WTC11 (cell line): ENCODE measurements at regions of chr1 and their contacts with region 1.

Region 1: GRCh38 chr1:165597883-165598675 is 33.0 kb upstream of the MGST3 start:
- DNase-seq: peak; percentile 93
- ATAC-seq: peak; percentile 97
- H3K4me3 Mint-ChIP-seq: peak overlapping the region; percentile 95
- H3K27ac Mint-ChIP-seq: peak overlapping the region; percentile 85
- H3K4me1 Mint-ChIP-seq: peaks cover 30% of the 10 kb centered on the region
- H3K27me3 Mint-ChIP-seq: peaks cover 15% of the 10 kb centered on the region
- CTCF ChIP-seq: no peak

Region 2: GRCh38 chr1:165392634-165393571 is 205.2 kb before region 1 on chr1:
- CTCF ChIA-PET with region 1: interaction called, 38 read pairs
- POLR2A ChIA-PET with region 1: no interaction called
- DNase-seq: peak; percentile 84
- ATAC-seq: peak; percentile 99
- H3K4me3 Mint-ChIP-seq: peak overlapping the region; percentile 64
- H3K27ac Mint-ChIP-seq: no peak overlapping the region
- H3K4me1 Mint-ChIP-seq: peaks cover 7% of the 10 kb centered on the region
- H3K27me3 Mint-ChIP-seq: peaks cover 24% of the 10 kb centered on the region
- CTCF ChIP-seq: peak; percentile 87

Region 3: DNA sequence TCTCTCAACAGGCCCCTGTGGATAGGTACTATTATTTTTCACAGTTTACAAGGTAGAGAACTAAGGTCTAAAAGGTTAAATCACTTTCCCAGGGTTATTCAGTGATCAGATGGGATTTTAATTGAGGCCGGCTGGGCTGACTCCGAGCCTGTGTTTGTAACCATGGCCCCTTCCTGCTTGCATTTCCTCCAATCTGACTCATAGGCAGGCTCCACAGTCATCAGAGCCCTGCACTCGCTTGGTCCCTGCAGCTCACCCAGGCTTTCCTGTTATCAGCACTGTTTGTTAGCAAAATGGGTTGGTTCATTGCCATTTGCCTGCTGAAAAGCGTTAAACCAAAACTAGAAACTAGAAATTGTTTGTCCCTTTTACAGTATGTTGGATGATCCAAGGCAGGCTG is 200.1 kb before region 1 on chr1:
- CTCF ChIA-PET with region 1: interaction called, 38 read pairs
- POLR2A ChIA-PET with region 1: no interaction called
- DNase-seq: no peak
- ATAC-seq: peak; percentile 46
- H3K4me3 Mint-ChIP-seq: no peak overlapping the region
- H3K27ac Mint-ChIP-seq: no peak overlapping the region
- H3K4me1 Mint-ChIP-seq: peaks cover 12% of the 10 kb centered on the region
- H3K27me3 Mint-ChIP-seq: peaks cover 9% of the 10 kb centered on the region
- CTCF ChIP-seq: no peak

Region 4: GRCh38 chr1:165403835-165404482 is 194.1 kb before region 1 on chr1:
- CTCF ChIA-PET with region 1: interaction called, 17 read pairs
- POLR2A ChIA-PET with region 1: no interaction called
- DNase-seq: peak; percentile 66
- ATAC-seq: peak; percentile 92
- H3K4me3 Mint-ChIP-seq: no peak overlapping the region
- H3K27ac Mint-ChIP-seq: no peak overlapping the region
- H3K4me1 Mint-ChIP-seq: no peaks in the 10 kb centered on the region
- H3K27me3 Mint-ChIP-seq: no peaks in the 10 kb centered on the region; the same call in 1 of the 2 replicates
- CTCF ChIP-seq: peak; percentile 64

Region 5: GRCh38 chr1:165409657-165410358 is 188.3 kb before region 1 on chr1:
- CTCF ChIA-PET with region 1: interaction called, 17 read pairs
- POLR2A ChIA-PET with region 1: no interaction called
- DNase-seq: no peak
- ATAC-seq: no peak
- H3K4me3 Mint-ChIP-seq: no peak overlapping the region
- H3K27ac Mint-ChIP-seq: no peak overlapping the region
- H3K4me1 Mint-ChIP-seq: no peaks in the 10 kb centered on the region
- H3K27me3 Mint-ChIP-seq: peaks cover 3% of the 10 kb centered on the region; the same call in 1 of the 2 replicates
- CTCF ChIP-seq: no peak

Region 6: GRCh38 chr1:165659581-165659895 is 61.5 kb after region 1 on chr1:
- CTCF ChIA-PET with region 1: interaction called, 10 read pairs
- POLR2A ChIA-PET with region 1: no interaction called
- DNase-seq: no peak
- ATAC-seq: peak; percentile 88
- H3K4me3 Mint-ChIP-seq: no peak overlapping the region
- H3K27ac Mint-ChIP-seq: no peak overlapping the region
- H3K4me1 Mint-ChIP-seq: 0 out of 2 replicates have a peak, but pooled peaks cover 5% of the 10 kb centered on the region
- H3K27me3 Mint-ChIP-seq: no peaks in the 10 kb centered on the region
- CTCF ChIP-seq: no peak

Region 7: DNA sequence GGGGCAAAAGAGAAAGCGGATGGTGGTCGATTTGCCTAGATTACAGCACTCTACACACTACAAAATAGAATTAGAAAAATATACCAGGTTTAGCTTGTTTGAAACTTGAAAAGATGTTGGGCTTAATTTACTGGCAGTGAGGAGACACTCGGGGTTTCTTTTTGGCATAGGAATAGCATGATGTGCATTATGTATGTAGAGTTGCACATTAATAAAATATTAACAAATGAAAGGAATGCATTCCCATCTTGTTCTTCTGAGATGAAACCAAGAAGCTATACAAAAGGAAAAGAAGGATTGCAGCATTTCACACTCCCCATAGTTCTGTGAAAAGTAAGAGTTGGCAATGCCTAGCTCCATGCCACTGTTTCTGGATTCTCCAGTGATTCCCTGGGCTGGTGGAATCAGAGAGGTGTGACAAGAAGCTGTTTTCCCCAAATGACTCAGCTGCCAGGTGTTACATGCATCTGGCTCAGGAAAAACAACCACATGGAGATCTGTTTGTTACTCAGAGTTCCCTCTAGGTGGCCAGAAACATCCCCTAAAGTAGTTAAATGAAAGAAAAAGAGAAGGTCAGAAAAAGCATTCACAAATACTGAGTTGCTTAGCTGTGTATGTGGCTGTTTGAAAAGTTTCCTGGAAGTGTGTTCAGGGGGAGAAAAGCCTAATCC is 345.0 kb after region 1 on chr1:
- CTCF ChIA-PET with region 1: no interaction called
- POLR2A ChIA-PET with region 1: no interaction called
- DNase-seq: no peak
- ATAC-seq: peak; percentile 76
- H3K4me3 Mint-ChIP-seq: no peak overlapping the region
- H3K27ac Mint-ChIP-seq: peak overlapping the region; percentile 8
- H3K4me1 Mint-ChIP-seq: peaks cover 26% of the 10 kb centered on the region
- H3K27me3 Mint-ChIP-seq: no peaks in the 10 kb centered on the region; the same call in none of the 2 replicates
- CTCF ChIP-seq: no peak